Caco-2 (cell line): ENCODE measurements at regions of chr16 and their contacts with region 1.

Region 1: DNA sequence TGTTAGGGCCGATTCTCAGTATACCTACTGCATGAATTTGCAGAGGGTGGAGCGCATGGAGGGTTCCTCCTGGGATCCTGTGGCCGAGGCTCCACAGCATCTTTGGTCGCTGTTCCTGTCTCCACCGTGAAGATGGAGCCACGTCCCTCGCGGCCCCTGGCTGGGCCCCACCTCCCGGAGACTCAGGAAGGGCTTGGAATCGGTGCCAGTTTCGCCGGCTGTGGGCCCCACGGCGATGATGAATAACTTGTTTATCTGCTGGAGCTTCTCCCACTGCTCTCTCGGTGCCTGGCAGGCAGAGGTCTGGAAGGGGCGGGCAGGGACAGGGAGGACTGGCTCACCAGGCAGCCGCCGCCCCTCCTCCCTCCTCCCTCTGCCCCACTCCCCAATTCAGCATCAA is 8.1 kb downstream of the SLC5A11 start:
- DNase-seq: no peak
- H3K4me3 ChIP-seq: no peak overlapping the region
- H3K4me3 Mint-ChIP-seq: no peak overlapping the region
- H3K27ac Mint-ChIP-seq: no peak overlapping the region
- H3K4me1 ChIP-seq: no peaks in the 10 kb centered on the region
- H3K4me1 Mint-ChIP-seq: no peaks in the 10 kb centered on the region
- H3K27me3 ChIP-seq: no peaks in the 10 kb centered on the region
- H3K27me3 Mint-ChIP-seq: no peaks in the 10 kb centered on the region
- CTCF ChIP-seq: no peak

Region 2: GRCh38 chr16:24810951-24811843 is 42.6 kb before region 1 on chr16:
- CTCF ChIA-PET with region 1: no interaction called
- POLR2A ChIA-PET with region 1: no interaction called
- intact Hi-C with region 1: loop called (anchors 1 kb)
- DNase-seq: no peak
- H3K4me3 ChIP-seq: no peak overlapping the region
- H3K4me3 Mint-ChIP-seq: no peak overlapping the region
- H3K27ac Mint-ChIP-seq: no peak overlapping the region
- H3K4me1 ChIP-seq: no peaks in the 10 kb centered on the region
- H3K4me1 Mint-ChIP-seq: peaks cover 14% of the 10 kb centered on the region
- H3K27me3 ChIP-seq: no peaks in the 10 kb centered on the region
- H3K27me3 Mint-ChIP-seq: no peaks in the 10 kb centered on the region
- CTCF ChIP-seq: no peak